CD4-positive, alpha-beta T cell (primary cell): ENCODE measurements at regions of chr14 and their contacts with region 1.

Region 1: DNA sequence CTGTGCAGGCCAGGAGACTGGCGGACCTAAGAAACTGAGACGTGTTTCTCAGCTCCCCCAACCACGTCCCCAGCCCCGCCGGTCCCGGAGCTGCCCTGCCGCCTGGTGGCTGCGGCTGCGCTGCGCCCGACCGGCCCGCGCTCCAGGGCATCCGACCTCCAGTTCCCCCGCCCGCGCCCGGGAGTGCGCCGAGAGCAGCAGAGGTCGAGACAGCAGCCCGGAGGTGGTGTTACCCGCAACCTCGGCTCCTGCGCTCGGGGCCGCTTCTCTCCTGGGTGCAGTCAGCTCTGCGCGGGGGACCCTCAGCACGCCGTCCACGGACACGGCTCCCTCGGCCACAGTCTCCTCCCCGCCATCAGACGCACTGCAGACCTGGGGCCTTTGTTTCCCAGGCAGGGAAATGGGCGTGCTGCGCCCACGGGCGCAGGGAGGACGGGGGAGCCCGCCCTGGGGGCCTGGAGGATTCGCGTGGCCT is 21.6 kb upstream of the GPR132 start:
- DNase-seq: peak; percentile 72 to 92 (median 86)
- ATAC-seq: peak; percentile 89
- H3K4me3 ChIP-seq: peak overlapping the region; percentile 60
- H3K4me3 Mint-ChIP-seq: peak overlapping the region; percentile 72
- H3K27ac ChIP-seq: peak overlapping the region in 1 of 2 donors; percentile 46
- H3K27ac Mint-ChIP-seq: no peak overlapping the region
- H3K4me1 ChIP-seq: peaks cover 35% of the 10 kb centered on the region
- H3K4me1 Mint-ChIP-seq: peaks cover 12% of the 10 kb centered on the region
- H3K27me3 ChIP-seq: peaks cover 0 to 5% of the 10 kb centered on the region in 2 experiments
- H3K27me3 Mint-ChIP-seq: no peaks in the 10 kb centered on the region
- CTCF ChIP-seq: peak; percentile 83

Region 2: DNA sequence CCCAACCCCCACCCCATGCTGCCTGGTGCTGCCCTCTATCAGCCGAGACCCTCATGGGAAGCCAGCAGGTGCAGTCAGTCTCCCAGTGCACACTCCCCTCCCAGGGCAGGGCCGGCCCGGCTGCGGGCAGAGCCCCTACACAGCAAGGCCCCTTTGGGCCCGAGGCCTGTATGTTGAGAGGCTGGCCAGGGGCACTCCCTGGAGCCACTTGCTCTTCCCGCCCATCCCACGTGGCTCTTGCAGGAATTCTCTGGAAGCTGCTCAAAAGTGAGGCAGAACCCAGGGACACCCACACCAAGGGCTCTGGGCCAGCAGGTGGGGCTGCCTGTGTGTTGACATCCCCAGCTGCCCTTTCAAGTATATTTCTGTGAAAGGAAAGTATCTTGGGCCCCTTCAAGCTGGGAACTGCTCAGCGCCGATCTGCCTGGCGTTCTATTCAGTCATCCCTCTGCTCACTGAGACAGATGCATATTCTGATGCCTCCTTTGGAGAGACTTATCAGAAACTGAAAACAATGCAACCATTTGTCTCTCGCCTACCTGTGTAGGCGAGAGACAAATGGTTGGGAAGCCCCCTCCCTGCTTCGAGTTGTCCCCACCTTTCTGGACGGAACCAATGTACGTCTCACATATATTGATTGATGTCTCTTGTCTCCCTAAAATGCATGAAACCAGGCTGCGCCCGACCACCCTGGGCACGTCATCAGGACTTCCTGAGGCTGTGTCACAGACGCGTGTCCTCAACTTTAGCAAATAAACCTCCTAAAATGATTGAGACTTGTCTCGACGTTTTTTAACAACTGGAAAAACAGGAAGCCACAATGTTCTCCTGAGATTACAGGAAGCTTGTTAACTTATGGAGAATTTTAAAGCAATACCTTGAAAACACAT is 27.6 kb before region 1 on chr14:
- CTCF ChIA-PET with region 1: interaction called, 75 read pairs
- POLR2A ChIA-PET with region 1: interaction called, 40 read pairs
- intact Hi-C with region 1: loop called in 1 of 2 experiments (anchors 1 kb)
- DNase-seq: peak in 11 of 14 experiments; percentile 27 to 86 (median 74)
- ATAC-seq: peak; percentile 77
- H3K4me3 ChIP-seq: peak overlapping the region; percentile 82
- H3K4me3 Mint-ChIP-seq: peak overlapping the region; percentile 89
- H3K27ac ChIP-seq: peak overlapping the region; percentile 86 to 95
- H3K27ac Mint-ChIP-seq: peak overlapping the region; percentile 91
- H3K4me1 ChIP-seq: peaks cover 63% of the 10 kb centered on the region
- H3K4me1 Mint-ChIP-seq: peaks cover 53% of the 10 kb centered on the region
- H3K27me3 ChIP-seq: no peaks in the 10 kb centered on the region
- H3K27me3 Mint-ChIP-seq: no peaks in the 10 kb centered on the region
- CTCF ChIP-seq: peak; percentile 35

Region 3: DNA sequence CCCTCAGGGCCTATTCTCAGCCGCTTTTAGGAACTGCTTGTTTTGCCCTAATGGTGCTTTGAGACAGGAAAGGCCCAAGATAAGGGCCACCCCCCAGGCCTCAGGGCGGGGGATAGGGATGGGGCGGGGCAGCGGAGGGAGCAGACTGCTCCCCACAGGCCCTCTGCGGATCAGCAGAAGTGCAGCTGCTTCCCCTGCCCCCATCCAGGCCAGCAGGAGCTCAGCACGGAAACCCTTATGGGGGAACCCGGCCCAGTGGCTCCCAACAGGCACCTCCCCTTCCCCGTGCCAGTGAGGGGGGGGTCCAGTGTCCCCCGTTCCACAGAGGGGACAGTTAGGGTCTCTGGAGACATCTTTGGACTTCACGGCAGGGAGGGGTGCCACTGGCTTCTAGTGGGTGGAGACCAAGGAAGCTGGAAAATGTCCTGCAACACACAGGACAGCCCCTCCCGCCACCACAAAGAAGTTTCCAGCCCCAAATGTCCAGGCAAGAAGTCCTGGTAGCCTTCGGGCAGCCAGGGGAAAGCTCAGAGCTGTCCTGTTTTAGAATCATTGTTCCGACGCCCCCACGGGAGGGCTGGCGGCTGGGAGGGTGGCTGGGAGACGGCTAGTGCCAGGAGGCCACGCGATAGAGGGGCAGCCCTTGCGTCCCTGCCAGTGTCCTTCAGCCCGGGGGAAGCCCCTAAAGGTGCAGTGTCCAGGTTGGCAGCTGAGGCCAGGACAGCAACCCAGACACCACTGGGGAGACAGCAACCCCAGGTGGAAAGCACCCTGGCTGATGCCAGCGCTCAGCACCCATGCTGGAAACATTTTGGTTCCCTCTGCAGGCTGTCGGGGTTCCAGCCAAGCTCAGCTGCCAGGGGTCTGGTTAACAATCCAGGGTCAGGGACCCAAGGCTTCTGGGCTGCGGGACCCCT is 11.2 kb before region 1 on chr14:
- CTCF ChIA-PET with region 1: interaction called, 11 read pairs
- POLR2A ChIA-PET with region 1: interaction called, 29 read pairs
- intact Hi-C with region 1: no loop called
- DNase-seq: peak in 5 of 14 experiments; percentile 42 to 59 (median 46)
- ATAC-seq: peak; percentile 64
- H3K4me3 ChIP-seq: no peak overlapping the region
- H3K4me3 Mint-ChIP-seq: no peak overlapping the region
- H3K27ac ChIP-seq: no peak overlapping the region
- H3K27ac Mint-ChIP-seq: no peak overlapping the region
- H3K4me1 ChIP-seq: peaks cover 42% of the 10 kb centered on the region
- H3K4me1 Mint-ChIP-seq: peaks cover 34% of the 10 kb centered on the region
- H3K27me3 ChIP-seq: no peaks in the 10 kb centered on the region
- H3K27me3 Mint-ChIP-seq: no peaks in the 10 kb centered on the region
- CTCF ChIP-seq: no peak

Region 4: GRCh38 chr14:105123981-105124765 is 37.3 kb after region 1 on chr14:
- CTCF ChIA-PET with region 1: no interaction called
- POLR2A ChIA-PET with region 1: no interaction called
- intact Hi-C with region 1: no loop called
- DNase-seq: no peak
- ATAC-seq: no peak
- H3K4me3 ChIP-seq: no peak overlapping the region
- H3K4me3 Mint-ChIP-seq: no peak overlapping the region
- H3K27ac ChIP-seq: no peak overlapping the region
- H3K27ac Mint-ChIP-seq: no peak overlapping the region
- H3K4me1 ChIP-seq: peaks cover 9% of the 10 kb centered on the region
- H3K4me1 Mint-ChIP-seq: peaks cover 7% of the 10 kb centered on the region
- H3K27me3 ChIP-seq: peaks cover 0 to 6% of the 10 kb centered on the region in 2 experiments
- H3K27me3 Mint-ChIP-seq: peaks cover 46% of the 10 kb centered on the region
- CTCF ChIP-seq: no peak

Region 5: GRCh38 chr14:105180592-105181548 is 94.0 kb after region 1 on chr14 and contains the start of gene NUDT14:
- CTCF ChIA-PET with region 1: interaction called, 3 read pairs
- POLR2A ChIA-PET with region 1: no interaction called
- intact Hi-C with region 1: loop called in 1 of 2 experiments (anchors 5 kb)
- DNase-seq: peak; percentile 73 to 96 (median 88)
- ATAC-seq: peak; percentile 93
- H3K4me3 ChIP-seq: peak within 1 kb of the TSS; percentile 55
- H3K4me3 Mint-ChIP-seq: peak within 1 kb of the TSS; percentile 78
- H3K27ac ChIP-seq: no peak within 1 kb of the TSS
- H3K27ac Mint-ChIP-seq: no peak within 1 kb of the TSS
- H3K4me1 ChIP-seq: peaks cover 45% of the 10 kb centered on the region
- H3K4me1 Mint-ChIP-seq: peaks cover 7% of the 10 kb centered on the region
- H3K27me3 ChIP-seq: no peaks in the 10 kb centered on the region
- H3K27me3 Mint-ChIP-seq: no peaks in the 10 kb centered on the region
- CTCF ChIP-seq: no peak
- total RNA-seq, gene NUDT14: 9.0 to 9.2 TPM

Region 6: GRCh38 chr14:105300792-105301533 is 214.1 kb after region 1 on chr14 and contains the start of gene BRF1:
- CTCF ChIA-PET with region 1: interaction called, 3 read pairs
- POLR2A ChIA-PET with region 1: interaction called, 3 read pairs
- intact Hi-C with region 1: loop called in 1 of 2 experiments (anchors 5 kb)
- DNase-seq: peak; percentile 95 to 100 (median 98)
- ATAC-seq: peak; percentile 88
- H3K4me3 ChIP-seq: peak within 1 kb of the TSS; percentile 71
- H3K4me3 Mint-ChIP-seq: peak within 1 kb of the TSS; percentile 98
- H3K27ac ChIP-seq: peak within 1 kb of the TSS; percentile 79 to 88
- H3K27ac Mint-ChIP-seq: peak within 1 kb of the TSS; percentile 85
- H3K4me1 ChIP-seq: peaks cover 37% of the 10 kb centered on the region
- H3K4me1 Mint-ChIP-seq: peaks cover 46% of the 10 kb centered on the region
- H3K27me3 ChIP-seq: no peaks in the 10 kb centered on the region
- H3K27me3 Mint-ChIP-seq: no peaks in the 10 kb centered on the region
- CTCF ChIP-seq: no peak
- total RNA-seq, gene BRF1: 77.4 to 77.7 TPM

Region 7: DNA sequence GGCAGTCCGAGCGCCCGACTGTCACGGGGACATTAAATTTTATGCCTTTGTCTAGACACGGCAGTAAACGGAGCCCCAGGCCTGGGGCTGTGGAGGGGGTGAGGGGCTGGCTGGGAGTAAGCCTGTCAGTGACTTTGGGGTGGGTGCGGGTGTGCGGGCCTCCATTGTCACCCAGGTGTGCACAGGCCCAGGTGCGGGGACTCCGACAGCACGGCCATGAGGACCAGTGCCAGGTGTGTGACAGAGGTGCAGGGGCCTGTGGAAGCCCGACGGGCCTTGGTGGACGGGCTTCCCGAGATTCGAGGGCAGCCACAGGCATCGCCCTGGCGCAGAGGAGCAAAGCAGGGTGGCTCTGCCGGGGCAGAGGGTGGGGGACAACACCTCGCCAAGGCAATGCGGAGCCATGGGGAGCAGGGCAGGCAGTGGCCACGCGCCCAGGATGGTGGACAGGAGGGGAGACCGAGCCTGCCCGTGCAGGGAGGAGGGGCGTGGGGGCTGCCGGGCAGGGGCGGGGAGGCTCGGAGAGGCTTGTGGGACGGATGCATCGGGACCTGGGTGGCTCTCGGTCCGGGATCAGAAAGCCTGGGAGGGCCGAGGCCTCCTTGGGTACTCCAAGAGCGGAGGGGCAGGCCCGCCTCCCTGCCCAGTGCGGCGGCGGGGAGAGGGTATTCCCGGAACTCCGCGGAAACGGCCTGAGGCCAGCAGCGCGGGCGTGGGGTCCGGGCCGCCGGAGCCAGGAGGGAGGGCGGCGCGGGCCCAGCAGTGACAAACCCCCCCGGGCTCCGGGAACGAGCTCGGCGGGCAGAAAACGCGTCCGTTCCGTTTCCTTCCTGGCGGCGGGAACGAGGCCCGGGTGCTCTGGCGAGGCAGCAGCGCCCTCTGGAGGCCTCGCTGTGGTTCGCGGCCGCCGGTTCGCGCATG is 441.1 kb after region 1 on chr14:
- CTCF ChIA-PET with region 1: no interaction called
- POLR2A ChIA-PET with region 1: no interaction called
- intact Hi-C with region 1: loop called in 1 of 2 experiments (anchors 1 kb)
- DNase-seq: peak; percentile 63 to 92 (median 77)
- ATAC-seq: peak; percentile 65
- H3K4me3 ChIP-seq: peak overlapping the region; percentile 47
- H3K4me3 Mint-ChIP-seq: peak overlapping the region; percentile 87
- H3K27ac ChIP-seq: no peak overlapping the region
- H3K27ac Mint-ChIP-seq: no peak overlapping the region
- H3K4me1 ChIP-seq: peaks cover 39% of the 10 kb centered on the region
- H3K4me1 Mint-ChIP-seq: peaks cover 17% of the 10 kb centered on the region
- H3K27me3 ChIP-seq: peaks cover 19 to 23% of the 10 kb centered on the region in 2 experiments
- H3K27me3 Mint-ChIP-seq: peaks cover 22% of the 10 kb centered on the region
- CTCF ChIP-seq: peak; percentile 69